Body of pancreas (tissue), 4 donors: ENCODE measurements at regions of chr4 and their contacts with region 1.

Region 1: DNA sequence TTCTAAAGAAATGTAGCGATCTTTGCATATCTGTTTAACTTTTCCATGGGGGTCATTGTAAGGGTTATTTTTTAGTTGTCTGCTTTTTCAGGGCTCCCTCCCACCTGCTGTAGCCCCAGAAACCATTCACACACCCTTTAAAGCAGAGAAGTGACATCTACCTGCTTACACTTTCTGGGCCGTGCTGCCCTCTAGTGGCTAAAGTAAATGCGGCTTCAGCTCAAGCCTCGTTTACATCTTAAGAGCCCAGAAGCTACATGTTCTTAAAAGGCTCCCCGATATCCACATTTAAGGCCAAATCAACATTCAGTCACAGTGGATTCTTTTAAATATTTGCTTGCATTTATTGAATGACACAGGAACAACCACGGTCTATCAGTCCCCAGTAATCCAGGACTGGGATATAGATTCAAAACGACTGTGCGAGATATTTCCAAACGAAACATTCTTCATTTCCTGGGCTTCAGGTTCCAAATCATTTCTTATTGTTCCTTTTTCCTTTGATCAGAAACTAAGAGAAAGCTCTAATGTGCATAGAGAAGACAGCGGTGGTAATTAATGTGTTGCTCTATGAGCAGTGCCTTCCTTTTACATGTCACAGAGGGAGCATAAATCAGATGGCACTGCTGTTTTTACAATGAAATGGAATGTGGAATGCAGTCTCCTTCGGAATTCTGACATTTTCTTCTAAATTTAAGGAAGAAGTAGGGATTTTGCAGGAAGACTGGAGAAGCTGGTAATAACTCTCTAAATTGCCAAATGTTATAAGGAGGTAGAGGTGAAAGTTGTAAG is 119.9 kb downstream of the RASGEF1B start:
- DNase-seq: peak; percentile 73 to 84 (median 75)
- ATAC-seq: peak; percentile 81
- H3K4me3 ChIP-seq: no peak overlapping the region
- H3K27ac ChIP-seq: no peak overlapping the region
- H3K4me1 ChIP-seq: peaks cover 11% of the 10 kb centered on the region
- H3K27me3 ChIP-seq: no peaks in the 10 kb centered on the region
- CTCF ChIP-seq: peak; percentile 70 to 91 (median 74)
- POLR2A ChIP-seq: no peak

Region 2: DNA sequence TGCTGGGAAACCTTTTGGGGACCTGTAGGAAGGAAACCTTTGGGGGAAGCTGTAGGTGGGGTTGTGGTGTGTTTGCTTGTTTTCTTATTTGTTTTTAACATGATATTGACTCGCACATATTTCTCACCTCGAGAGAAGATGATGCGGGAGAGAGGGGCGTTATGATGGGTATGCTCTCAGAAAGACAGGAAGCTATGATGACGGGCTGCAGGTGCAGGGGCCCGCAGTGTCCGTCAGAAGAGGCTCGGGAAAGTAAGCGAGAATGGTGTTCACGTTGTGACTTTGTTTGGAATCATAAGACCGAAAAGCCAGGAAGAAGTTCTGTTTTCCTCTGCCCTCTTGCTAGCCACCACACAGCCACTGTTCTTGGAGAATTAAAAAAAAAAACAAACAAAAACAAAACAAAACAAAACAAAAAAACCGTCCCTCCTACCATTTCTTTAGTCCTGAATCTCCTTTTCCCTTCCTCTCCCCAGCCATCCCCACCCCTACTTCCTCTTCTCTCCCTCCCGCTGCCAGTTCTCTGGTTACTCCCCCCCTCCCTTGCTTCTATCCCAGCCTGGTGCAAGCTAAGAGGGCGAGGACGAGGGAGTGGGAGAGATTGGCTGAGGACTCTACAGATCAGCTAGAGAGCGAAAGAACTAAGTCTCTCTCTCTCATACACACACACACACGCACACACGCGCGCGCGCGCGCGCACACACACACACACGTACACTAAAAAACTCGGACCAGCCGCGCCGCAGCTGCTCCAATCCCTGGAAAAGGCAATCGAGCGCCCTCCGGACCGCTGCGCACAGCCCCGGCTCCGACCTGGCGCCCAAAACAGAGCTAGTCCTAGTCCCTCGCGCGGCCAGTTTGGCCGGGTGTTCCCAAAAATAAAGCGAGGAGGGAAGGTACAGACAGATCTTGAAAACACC is 321.5 kb before region 1 on chr4 and contains the start of gene BMP3:
- intact Hi-C with region 1: no loop called
- DNase-seq: peak in 2 of 4 donors; percentile 4 to 15
- ATAC-seq: peak; percentile 27
- H3K4me3 ChIP-seq: no peak within 1 kb of the TSS
- H3K27ac ChIP-seq: no peak within 1 kb of the TSS
- H3K4me1 ChIP-seq: peaks cover 17% of the 10 kb centered on the region
- H3K27me3 ChIP-seq: peaks cover 0 to 17% of the 10 kb centered on the region in 2 donors
- CTCF ChIP-seq: no peak
- POLR2A ChIP-seq: no peak
- total RNA-seq, gene BMP3: 0.26 TPM in 1 of 2 donors, not detected in the other

Region 3: GRCh38 chr4:81069706-81070331 is 282.0 kb before region 1 on chr4:
- intact Hi-C with region 1: loop called (anchors 10 kb)
- DNase-seq: peak; percentile 73 to 85 (median 78)
- ATAC-seq: peak; percentile 87
- H3K4me3 ChIP-seq: no peak overlapping the region
- H3K27ac ChIP-seq: no peak overlapping the region
- H3K4me1 ChIP-seq: no peaks in the 10 kb centered on the region
- H3K27me3 ChIP-seq: no peaks in the 10 kb centered on the region
- CTCF ChIP-seq: peak; percentile 70 to 90 (median 83)
- POLR2A ChIP-seq: no peak

Region 4: DNA sequence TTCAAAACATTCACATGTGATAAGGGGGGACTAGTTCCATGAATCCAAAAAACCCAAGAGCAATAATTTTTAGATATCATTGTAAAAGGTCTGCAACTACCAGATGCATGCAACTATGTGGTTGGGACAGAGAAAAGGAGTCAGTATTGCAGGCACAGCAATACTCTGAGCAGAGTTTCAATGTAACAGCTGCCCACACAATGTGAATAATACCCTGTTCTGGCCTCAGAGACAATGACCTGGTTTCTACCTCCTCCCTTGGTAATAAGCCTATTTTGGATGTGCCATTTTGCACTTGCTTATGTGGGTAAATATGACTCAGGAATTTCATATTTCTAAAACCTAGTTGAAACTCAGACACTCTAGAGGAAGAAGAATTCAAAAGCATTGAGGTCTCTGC is 314.6 kb after region 1 on chr4:
- intact Hi-C with region 1: no loop called
- DNase-seq: no peak
- ATAC-seq: no peak
- H3K4me3 ChIP-seq: no peak overlapping the region
- H3K27ac ChIP-seq: no peak overlapping the region
- H3K4me1 ChIP-seq: no peaks in the 10 kb centered on the region
- H3K27me3 ChIP-seq: no peaks in the 10 kb centered on the region
- CTCF ChIP-seq: no peak
- POLR2A ChIP-seq: no peak